HepG2 (cell line): ENCODE measurements at regions of chr15 and their contacts with region 1.

Region 1: GRCh38 chr15:41230650-41231533 is at the starts of genes CHP1 and EXD1:
- DNase-seq: peak; percentile 94
- ATAC-seq: peak; percentile 98
- H3K4me3 ChIP-seq: peak within 1 kb of the TSS; percentile 85 to 91 (median 89)
- H3K27ac ChIP-seq: peak within 1 kb of the TSS; percentile 89
- H3K4me1 ChIP-seq: peaks cover 31% of the 10 kb centered on the region
- H3K27me3 ChIP-seq: no peaks in the 10 kb centered on the region
- CTCF ChIP-seq: peak; percentile 93
- EP300 ChIP-seq: 0 out of 4 replicates have a peak, but pooled peaks of 1 of the 2 experiments have one; percentile 21
- POLR2A ChIP-seq: peak; percentile 86 to 90
- RAD21 ChIP-seq: peak; percentile 58; the same call in 1 of the 2 replicates
- total RNA-seq, gene CHP1: 76.4 and 111 TPM in 2 replicates
- total RNA-seq, gene EXD1: not detected in 2 replicates

Region 2: GRCh38 chr15:41241221-41241964 is 10.5 kb after region 1 on chr15:
- CTCF ChIA-PET with region 1: no interaction called
- POLR2A ChIA-PET with region 1: interaction called, 26 read pairs
- in situ Hi-C with region 1: no loop called
- intact Hi-C with region 1: no loop called
- DNase-seq: peak; percentile 91
- ATAC-seq: peak; percentile 89
- H3K4me3 ChIP-seq: peak overlapping the region in 1 of 3 experiments; percentile 17; a peak in 1 of 6 replicates
- H3K27ac ChIP-seq: peak overlapping the region; percentile 80
- H3K4me1 ChIP-seq: peaks cover 40% of the 10 kb centered on the region
- H3K27me3 ChIP-seq: no peaks in the 10 kb centered on the region
- CTCF ChIP-seq: no peak
- EP300 ChIP-seq: peak in 1 of 2 experiments; percentile 72; a peak in 1 of 4 replicates
- POLR2A ChIP-seq: no peak
- RAD21 ChIP-seq: no peak

Region 3: DNA sequence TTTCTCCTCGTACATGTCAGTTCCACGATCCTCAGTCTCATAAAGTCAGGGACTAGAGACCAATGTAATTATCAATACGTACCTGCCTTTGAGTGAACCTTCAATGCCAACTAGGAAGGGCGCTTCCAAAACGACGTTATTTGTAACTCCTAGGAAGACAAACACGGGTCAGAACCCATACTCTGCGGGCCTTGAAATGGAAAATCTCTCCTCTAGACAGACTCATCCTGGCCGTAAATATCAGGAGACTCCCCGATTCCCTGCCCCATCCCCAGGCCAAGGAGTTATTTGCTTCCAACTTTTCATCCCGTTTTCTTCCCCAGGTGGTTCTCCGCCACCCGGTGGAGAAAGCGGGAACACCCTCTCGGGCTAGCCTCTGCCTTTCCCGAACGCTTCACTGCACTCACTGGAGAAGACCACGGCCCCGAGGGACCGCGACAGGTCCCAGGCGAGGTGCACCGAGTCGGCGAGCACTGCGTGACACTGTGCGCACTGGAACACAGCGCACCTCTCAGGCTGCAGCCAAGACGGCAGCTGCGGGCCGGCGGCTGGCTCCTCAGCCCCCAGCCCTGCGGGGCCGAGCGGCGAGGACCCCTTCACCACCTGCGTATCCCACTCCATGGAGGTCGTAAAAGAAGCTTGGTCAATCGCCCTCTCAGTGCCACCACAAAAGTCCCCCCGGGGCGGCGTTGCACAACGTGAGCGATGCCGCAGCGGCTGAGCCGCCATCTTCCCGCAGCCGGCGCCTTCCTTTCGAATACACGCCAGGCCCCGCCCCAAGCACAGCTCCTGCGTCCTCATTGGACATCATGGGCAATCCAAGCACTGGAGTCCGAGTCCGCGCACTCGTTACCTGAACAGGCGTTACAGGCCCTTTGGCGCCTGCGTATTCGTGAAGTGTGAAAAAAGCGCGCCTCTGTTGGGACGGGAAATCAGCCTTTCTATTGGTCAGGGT is 101.2 kb after region 1 on chr15 and contains the start of gene OIP5:
- CTCF ChIA-PET with region 1: interaction called, 3 read pairs
- POLR2A ChIA-PET with region 1: interaction called, 6 read pairs
- in situ Hi-C with region 1: no loop called
- intact Hi-C with region 1: loop called (anchors 5 kb)
- DNase-seq: peak; percentile 99
- ATAC-seq: peak; percentile 96
- H3K4me3 ChIP-seq: peak within 1 kb of the TSS; percentile 95 to 100 (median 99)
- H3K27ac ChIP-seq: peak within 1 kb of the TSS; percentile 88
- H3K4me1 ChIP-seq: peaks cover 35% of the 10 kb centered on the region
- H3K27me3 ChIP-seq: no peaks in the 10 kb centered on the region; a peak in 1 of 5 replicates
- CTCF ChIP-seq: peak; percentile 81
- EP300 ChIP-seq: no peak; a peak in 1 of 4 replicates
- POLR2A ChIP-seq: peak; percentile 74 to 95
- RAD21 ChIP-seq: peak; percentile 72
- total RNA-seq, gene OIP5: 38.0 and 39.1 TPM in 2 replicates